ENCODE measurements at regions of chr3 and their contacts with region 1.

Region 1: GRCh38 chr3:153768561-153769469 is 352.4 kb upstream of the ARHGEF26 start:
- DNase-seq: peak; percentile 21
- H3K4me3 ChIP-seq: no peak overlapping the region
- H3K27ac ChIP-seq: no peak overlapping the region
- H3K4me1 ChIP-seq: no peaks in the 10 kb centered on the region
- H3K27me3 ChIP-seq: no peaks in the 10 kb centered on the region
- CTCF ChIP-seq: peak; percentile 43 to 76 (median 72)
- POLR2A ChIP-seq: no peak

Region 2: DNA sequence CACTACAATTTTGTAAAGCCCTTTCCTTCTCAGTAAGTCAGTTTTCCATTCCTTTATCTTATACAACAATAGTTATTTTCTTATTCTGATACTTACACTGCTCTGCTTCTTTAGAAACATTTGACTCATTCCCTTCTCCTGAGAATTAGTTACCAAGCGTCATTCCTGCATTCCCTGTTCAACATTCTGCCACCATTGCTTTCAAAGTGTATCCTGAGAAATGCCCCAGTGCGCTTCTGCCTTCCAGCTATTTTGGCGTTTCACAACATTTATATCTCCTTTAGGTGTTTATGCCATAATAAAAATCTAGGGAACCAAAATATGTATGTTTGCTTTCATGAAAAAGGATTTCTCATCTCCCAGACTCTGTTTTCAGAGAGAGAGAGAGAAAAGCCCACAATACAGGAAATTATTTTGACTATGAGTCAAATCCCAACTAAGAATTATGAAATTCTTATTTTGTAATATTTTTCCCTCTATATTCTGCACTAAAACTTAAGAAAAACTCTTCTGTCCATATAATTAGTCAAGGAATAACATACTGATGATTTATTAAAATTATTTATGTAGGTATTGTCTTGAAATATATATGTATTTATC is 725.0 kb before region 1 on chr3:
- intact Hi-C with region 1: loop called (anchors 5 kb)
- DNase-seq: no peak
- H3K4me3 ChIP-seq: no peak overlapping the region
- H3K27ac ChIP-seq: no peak overlapping the region
- H3K4me1 ChIP-seq: no peaks in the 10 kb centered on the region
- H3K27me3 ChIP-seq: no peaks in the 10 kb centered on the region
- CTCF ChIP-seq: no peak
- POLR2A ChIP-seq: no peak

Region 3: DNA sequence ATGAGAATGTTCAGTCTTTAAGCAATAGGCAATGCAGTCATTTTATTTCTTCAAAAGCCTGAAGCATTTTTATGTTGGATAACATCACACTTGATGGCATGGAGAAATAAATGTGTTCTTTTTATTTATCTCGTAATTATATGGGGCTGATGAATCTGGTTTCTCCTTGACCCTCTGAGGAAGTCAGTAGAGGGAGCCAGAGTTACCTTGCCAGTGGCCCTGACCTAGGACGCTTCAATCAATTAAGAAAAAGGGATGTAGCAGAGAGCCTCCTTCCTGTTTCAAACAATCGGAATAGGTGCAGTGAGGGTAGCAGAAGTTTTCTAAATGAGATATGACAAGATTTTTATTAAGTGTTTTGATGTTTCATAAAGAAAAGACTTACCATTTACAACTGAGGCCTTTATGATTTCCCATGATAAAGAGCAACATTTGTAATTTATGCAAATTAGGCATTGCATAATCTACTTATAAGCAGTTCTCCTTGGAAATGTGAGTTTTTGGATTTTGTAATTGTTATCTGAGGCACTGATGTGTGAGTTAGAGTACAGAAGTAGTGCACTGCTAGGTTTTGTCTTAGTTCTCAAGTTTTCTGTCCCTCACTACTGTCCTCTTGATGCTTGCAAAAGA is 477.6 kb before region 1 on chr3:
- intact Hi-C with region 1: loop called (anchors 10 kb)
- DNase-seq: no peak
- H3K4me3 ChIP-seq: no peak overlapping the region
- H3K27ac ChIP-seq: no peak overlapping the region
- H3K4me1 ChIP-seq: no peaks in the 10 kb centered on the region
- H3K27me3 ChIP-seq: no peaks in the 10 kb centered on the region
- CTCF ChIP-seq: no peak
- POLR2A ChIP-seq: no peak

Region 4: DNA sequence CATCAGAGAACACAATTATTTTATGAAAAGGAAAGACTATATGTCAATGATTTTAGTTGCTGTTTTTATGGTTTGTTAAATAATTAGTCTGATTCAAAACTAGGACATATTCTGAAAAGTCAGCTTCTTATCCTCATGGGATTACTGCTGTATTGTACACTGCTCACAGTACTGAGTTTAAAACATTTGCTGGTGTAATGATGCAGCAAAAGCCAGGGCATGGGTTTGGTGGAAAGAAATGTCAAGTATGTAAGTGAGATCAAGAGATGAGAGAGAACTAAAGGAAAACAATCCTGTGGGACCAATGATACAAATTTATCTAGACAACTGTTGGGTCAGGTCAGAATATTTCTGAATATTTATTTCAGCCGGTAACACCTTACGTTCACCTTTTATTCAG is 142.3 kb after region 1 on chr3:
- intact Hi-C with region 1: no loop called
- DNase-seq: no peak
- H3K4me3 ChIP-seq: no peak overlapping the region
- H3K27ac ChIP-seq: no peak overlapping the region
- H3K4me1 ChIP-seq: no peaks in the 10 kb centered on the region
- H3K27me3 ChIP-seq: no peaks in the 10 kb centered on the region
- CTCF ChIP-seq: no peak
- POLR2A ChIP-seq: no peak